Caco-2 (cell line): ENCODE measurements at regions of chr21 and their contacts with region 1.

Region 1: GRCh38 chr21:26170471-26171257 is at the start of gene APP:
- DNase-seq: peak; percentile 75 to 92
- H3K4me3 ChIP-seq: peak within 1 kb of the TSS; percentile 97
- H3K4me3 Mint-ChIP-seq: peak within 1 kb of the TSS; percentile 86
- H3K27ac Mint-ChIP-seq: peak within 1 kb of the TSS; percentile 88
- H3K4me1 ChIP-seq: peaks cover 25% of the 10 kb centered on the region
- H3K4me1 Mint-ChIP-seq: peaks cover 18% of the 10 kb centered on the region
- H3K27me3 ChIP-seq: no peaks in the 10 kb centered on the region
- H3K27me3 Mint-ChIP-seq: no peaks in the 10 kb centered on the region
- CTCF ChIP-seq: peak; percentile 69 to 84
- total RNA-seq, gene APP: 324 and 331 TPM in 2 replicates

Region 2: DNA sequence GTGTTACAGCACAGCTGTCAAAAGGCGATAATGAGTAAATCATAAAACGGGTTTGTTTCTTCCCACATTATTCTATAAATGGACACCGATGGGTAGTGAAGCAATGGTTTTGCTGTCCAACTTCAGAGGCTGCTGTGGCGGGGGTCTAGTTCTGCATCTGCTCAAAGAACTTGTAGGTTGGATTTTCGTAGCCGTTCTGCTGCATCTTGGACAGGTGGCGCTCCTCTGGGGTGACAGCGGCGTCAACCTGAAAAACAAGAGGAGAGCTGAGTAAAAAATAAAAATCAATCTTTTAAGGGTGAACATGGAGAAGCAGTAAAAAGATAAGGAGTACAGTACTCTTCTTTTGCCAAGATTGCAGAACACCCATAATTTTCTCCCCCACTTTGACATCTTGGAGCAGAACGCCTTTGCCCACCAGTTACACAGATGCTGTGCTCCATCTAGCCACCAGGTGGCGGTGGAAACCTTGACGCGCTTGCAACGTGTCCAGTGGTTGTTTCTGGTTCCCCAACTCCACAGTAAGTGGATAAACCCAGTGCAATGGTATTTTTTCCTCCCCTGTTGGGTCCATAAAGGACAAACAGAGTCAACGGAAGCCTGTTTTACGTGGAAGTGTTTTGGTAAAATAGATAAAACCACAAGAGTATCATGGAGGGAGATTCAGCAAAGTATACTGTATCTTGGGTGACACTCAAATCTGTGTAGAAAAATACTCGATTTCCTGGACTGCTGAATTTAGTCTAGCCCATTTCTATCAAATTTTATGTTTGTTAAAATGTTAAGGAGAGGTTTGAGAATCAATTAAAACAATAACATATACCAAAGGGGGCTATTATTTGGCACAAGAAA is 288.9 kb before region 1 on chr21:
- CTCF ChIA-PET with region 1: no interaction called
- POLR2A ChIA-PET with region 1: no interaction called
- intact Hi-C with region 1: loop called (anchors 1 kb)
- DNase-seq: peak; percentile 59 to 69
- H3K4me3 ChIP-seq: no peak overlapping the region
- H3K4me3 Mint-ChIP-seq: no peak overlapping the region
- H3K27ac Mint-ChIP-seq: no peak overlapping the region
- H3K4me1 ChIP-seq: peaks cover 8% of the 10 kb centered on the region; the same call in 1 of the 2 replicates
- H3K4me1 Mint-ChIP-seq: no peaks in the 10 kb centered on the region
- H3K27me3 ChIP-seq: no peaks in the 10 kb centered on the region
- H3K27me3 Mint-ChIP-seq: no peaks in the 10 kb centered on the region
- CTCF ChIP-seq: peak; percentile 88 to 94

Region 3: DNA sequence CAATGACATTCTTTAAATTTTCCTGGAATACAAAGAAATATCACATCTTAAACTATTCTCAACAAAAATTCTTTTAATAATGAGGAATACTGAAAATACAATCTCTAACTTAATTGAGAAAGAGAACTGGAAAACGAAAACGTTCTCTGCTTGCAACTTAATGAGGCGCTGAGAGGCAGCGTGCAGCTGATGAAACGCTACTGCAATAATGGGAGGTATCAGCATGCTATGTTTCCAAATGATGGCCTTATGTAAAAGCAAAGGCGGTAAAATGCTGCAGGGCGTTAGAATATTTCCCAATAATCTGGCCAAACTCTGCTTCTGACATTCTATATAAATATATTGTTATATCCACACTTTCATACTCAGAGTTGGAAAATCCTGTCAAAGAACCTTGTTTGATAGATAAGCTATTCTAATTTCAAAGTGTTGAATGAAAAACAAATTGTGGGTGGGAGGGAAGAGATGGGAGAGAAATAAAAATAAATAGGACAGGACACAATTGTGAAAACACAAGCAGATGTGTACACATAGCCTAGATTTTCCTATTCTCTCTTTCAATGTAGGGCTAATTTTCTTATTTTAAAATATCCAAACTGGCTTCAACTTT is 70.9 kb before region 1 on chr21:
- CTCF ChIA-PET with region 1: no interaction called
- POLR2A ChIA-PET with region 1: no interaction called
- intact Hi-C with region 1: loop called (anchors 2 kb)
- DNase-seq: peak in 1 of 2 experiments; percentile 47
- H3K4me3 ChIP-seq: no peak overlapping the region
- H3K4me3 Mint-ChIP-seq: no peak overlapping the region
- H3K27ac Mint-ChIP-seq: no peak overlapping the region
- H3K4me1 ChIP-seq: peaks cover 20% of the 10 kb centered on the region
- H3K4me1 Mint-ChIP-seq: peaks cover 16% of the 10 kb centered on the region
- H3K27me3 ChIP-seq: no peaks in the 10 kb centered on the region
- H3K27me3 Mint-ChIP-seq: no peaks in the 10 kb centered on the region
- CTCF ChIP-seq: no peak

Region 4: DNA sequence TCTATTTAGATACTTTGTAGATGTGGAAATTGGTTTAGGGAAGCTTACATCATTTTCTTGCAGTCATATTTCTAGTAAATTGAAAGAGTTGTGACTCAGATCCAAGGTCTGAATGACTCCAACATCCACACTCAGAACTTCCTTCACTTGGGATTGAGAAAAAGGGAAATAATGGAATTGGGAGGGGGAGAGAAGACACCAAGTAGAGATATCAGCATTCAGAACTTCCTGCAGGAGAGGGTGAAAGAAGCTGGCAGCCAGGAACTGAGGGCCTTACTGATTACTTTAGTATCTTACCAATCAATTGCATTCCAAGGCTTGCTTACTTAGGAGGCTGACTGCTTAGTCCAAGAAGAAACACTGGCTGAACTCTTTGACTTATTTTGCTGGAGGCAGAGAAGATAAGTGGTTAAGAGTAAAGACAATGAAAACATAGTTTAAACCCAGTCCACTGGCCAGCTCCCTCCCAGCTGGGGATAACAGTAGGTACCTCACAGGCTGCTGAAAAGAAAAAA is 21.8 kb before region 1 on chr21:
- CTCF ChIA-PET with region 1: interaction called, 3 read pairs
- POLR2A ChIA-PET with region 1: no interaction called
- intact Hi-C with region 1: loop called (anchors 1 kb)
- DNase-seq: no peak
- H3K4me3 ChIP-seq: no peak overlapping the region
- H3K4me3 Mint-ChIP-seq: no peak overlapping the region
- H3K27ac Mint-ChIP-seq: peak overlapping the region; percentile 36
- H3K4me1 ChIP-seq: peaks cover 49% of the 10 kb centered on the region
- H3K4me1 Mint-ChIP-seq: peaks cover 23% of the 10 kb centered on the region
- H3K27me3 ChIP-seq: no peaks in the 10 kb centered on the region
- H3K27me3 Mint-ChIP-seq: no peaks in the 10 kb centered on the region
- CTCF ChIP-seq: no peak